Activated CD4-positive, alpha-beta memory T cell treated with anti-CD3 and anti-CD28 coated beads for 36 hours (primary cell): ENCODE measurements at regions of chr6 and their contacts with region 1.

Region 1: DNA sequence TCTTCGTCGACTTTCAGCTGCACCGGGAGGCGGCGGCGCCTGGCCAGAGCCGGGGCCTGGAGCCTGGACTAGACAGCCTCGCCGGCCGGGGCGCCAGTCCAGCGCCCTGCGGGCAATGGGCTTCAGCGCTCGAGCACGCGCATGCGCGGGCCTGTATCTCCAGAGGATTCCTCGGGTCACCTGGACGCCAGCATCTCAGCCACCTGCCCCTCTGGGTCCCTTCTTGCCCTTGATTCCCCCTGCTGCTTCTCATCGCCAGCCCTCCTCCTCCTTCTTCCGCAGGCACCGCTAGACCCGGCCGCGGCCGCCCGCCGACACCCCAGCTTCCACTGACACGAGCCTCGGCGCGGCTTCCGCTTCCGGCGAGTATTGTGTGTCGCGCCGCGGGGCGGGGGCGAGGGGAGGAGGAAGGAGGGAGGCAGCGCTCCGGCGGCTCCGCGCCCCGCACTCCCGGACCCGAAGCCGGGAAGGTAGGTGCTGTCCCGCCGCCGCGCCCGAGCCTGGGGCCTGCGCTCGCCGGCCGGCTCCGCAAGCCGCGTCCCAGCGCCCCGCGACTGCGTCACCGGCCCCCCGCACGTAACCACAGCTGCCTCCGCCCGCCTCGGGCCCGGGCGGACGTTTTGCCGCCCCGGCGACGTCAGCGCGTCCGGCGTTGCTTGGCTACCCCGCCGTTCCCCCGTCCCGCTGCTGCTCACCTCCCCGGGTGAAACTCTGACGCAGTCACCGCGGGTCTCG is at the start of gene TRIM39:
- DNase-seq: peak; percentile 90
- H3K4me3 Mint-ChIP-seq: peak within 1 kb of the TSS; percentile 93
- H3K27ac Mint-ChIP-seq: peak within 1 kb of the TSS; percentile 94
- H3K4me1 Mint-ChIP-seq: peaks cover 51% of the 10 kb centered on the region
- H3K27me3 Mint-ChIP-seq: no peaks in the 10 kb centered on the region
- total RNA-seq, gene TRIM39: 13.7 to 15.6 TPM

Region 2: DNA sequence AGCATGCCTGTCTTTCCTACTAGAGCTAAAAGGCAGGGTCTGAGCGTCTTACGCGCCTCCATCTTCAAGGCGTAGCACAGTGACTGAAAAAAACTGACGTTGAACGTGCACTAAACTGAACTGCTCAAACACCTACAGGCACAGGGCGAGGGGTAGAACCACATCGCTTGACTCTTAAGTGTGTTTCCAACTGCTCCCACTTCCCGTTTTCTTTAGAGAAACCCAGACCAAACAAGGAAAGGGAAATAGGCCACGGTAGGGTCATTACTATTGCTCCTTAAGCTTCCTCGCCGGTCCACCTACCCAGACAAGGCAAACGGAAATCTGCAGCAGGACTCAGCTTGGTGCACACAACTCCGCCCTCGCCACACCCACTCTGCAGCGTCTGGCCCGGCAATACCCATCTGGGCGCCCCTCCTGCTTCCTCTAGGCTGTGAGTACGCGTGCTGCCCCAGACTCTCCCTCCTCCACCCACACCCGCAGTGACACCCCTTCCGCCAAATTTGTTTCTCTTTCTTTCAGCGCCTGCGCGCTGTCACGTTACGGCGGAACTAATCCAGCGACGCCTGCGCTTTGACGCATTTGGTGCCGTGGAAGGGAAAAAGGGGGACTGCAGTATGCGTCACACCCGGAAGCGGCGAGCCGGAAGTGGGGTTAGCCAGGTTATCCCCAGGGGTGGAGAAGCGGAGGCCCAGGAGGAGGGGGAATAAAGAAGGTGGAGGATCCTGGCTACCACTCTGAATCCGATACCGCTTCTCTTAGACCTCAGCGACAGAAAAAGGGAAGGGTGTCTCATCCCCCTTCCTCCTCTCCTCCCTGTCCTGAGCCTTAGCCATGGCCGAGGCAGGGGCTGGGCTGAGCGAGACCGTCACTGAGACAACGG is 259.9 kb before region 1 on chr6 and contains the start of gene PPP1R11:
- CTCF ChIA-PET with region 1: no interaction called
- POLR2A ChIA-PET with region 1: no interaction called
- intact Hi-C with region 1: loop called (anchors 5 kb)
- DNase-seq: peak; percentile 100
- H3K4me3 Mint-ChIP-seq: peak within 1 kb of the TSS; percentile 88
- H3K27ac Mint-ChIP-seq: peak within 1 kb of the TSS; percentile 95
- H3K4me1 Mint-ChIP-seq: peaks cover 50% of the 10 kb centered on the region
- H3K27me3 Mint-ChIP-seq: peaks cover 8% of the 10 kb centered on the region
- total RNA-seq, gene PPP1R11: 51.3 to 55.0 TPM

Region 3: GRCh38 chr6:30219244-30219643 is 107.4 kb before region 1 on chr6:
- CTCF ChIA-PET with region 1: interaction called, 27 read pairs
- POLR2A ChIA-PET with region 1: interaction called, 4 read pairs
- intact Hi-C with region 1: no loop called
- DNase-seq: peak; percentile 60
- H3K4me3 Mint-ChIP-seq: no peak overlapping the region
- H3K27ac Mint-ChIP-seq: no peak overlapping the region
- H3K4me1 Mint-ChIP-seq: peaks cover 17% of the 10 kb centered on the region
- H3K27me3 Mint-ChIP-seq: no peaks in the 10 kb centered on the region

Region 4: DNA sequence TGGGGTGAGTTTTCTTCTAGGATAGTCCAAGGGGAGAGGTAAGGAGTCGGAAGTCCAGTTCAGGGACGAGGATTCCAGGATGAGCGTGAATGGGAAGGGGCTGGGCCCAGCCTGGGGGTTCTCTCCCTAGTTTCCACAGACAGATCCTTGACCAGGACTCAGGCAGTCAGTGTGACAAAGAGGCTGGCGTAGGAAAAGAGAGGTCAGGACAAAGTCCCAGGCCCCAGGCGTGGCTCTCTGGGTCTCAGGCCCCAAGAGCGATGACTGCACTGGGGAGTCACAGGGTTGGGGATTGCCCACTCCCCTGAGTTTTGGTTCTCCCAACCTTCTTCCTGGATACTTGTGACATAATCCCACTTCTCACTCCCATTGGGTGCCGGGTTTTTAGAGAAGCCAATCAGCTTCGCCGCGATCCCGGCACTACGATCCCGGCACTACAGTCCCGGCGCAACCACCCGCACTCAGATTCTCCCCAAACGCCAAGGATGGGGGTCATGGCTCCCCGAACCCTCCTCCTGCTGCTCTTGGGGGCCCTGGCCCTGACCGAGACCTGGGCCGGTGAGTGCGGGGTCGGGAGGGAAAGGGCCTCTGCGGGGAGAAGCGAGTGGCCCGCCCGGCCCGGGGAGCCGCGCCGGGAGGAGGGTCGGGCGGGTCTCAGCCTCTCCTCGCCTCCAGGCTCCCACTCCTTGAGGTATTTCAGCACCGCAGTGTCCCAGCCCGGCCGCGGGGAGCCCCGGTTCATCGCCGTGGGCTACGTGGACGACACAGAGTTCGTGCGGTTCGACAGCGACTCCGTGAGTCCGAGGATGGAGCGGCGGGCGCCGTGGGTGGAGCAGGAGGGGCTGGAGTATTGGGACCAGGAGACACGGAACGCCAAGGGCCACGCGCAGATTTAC is 67.3 kb before region 1 on chr6:
- CTCF ChIA-PET with region 1: no interaction called
- POLR2A ChIA-PET with region 1: no interaction called
- intact Hi-C with region 1: loop called (anchors 1 kb)
- DNase-seq: peak; percentile 82
- H3K4me3 Mint-ChIP-seq: peak overlapping the region; percentile 83
- H3K27ac Mint-ChIP-seq: peak overlapping the region; percentile 44
- H3K4me1 Mint-ChIP-seq: peaks cover 21% of the 10 kb centered on the region
- H3K27me3 Mint-ChIP-seq: peaks cover 1% of the 10 kb centered on the region

Region 5: DNA sequence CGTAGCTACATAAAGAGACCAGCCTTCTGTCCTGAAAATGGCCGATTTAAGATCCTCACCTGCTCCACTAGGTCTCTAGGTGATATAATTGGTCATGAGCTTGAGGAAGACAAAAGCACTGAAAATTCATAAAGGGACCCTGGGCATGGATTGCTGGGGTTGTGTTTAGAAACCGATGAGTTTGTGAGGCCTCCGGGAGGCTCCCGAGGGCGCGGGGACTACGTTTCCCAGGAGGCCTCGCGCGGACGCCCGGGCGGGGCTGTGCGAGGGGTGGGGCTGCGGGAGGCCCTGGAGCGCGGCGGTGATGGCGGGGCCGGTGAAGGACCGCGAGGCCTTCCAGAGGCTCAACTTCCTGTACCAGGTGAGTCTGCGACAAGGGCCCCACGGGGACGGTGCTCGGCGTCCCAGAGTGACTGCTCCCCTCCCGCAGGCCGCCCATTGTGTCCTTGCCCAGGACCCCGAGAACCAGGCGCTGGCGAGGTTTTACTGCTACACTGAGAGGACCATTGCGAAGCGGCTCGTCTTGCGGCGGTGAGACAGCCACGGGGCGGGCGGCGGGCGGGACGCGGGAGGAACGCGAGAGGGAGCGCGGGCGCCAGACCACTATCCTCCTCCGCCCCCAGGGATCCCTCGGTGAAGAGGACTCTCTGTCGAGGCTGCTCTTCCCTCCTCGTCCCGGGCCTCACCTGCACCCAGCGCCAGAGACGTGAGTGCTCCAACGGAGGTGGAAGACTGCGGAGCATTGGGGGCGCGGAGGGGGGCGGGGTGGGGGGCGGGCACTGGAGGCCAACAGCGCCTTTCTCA is 18.4 kb after region 1 on chr6 and contains the start of gene RPP21:
- CTCF ChIA-PET with region 1: no interaction called
- POLR2A ChIA-PET with region 1: interaction called, 3 read pairs
- intact Hi-C with region 1: loop called (anchors 1 kb)
- DNase-seq: peak; percentile 93
- H3K4me3 Mint-ChIP-seq: peak within 1 kb of the TSS; percentile 86
- H3K27ac Mint-ChIP-seq: peak within 1 kb of the TSS; percentile 86
- H3K4me1 Mint-ChIP-seq: peaks cover 39% of the 10 kb centered on the region
- H3K27me3 Mint-ChIP-seq: no peaks in the 10 kb centered on the region
- total RNA-seq, gene RPP21: 34.6 to 38.3 TPM